Left ventricle myocardium inferior (tissue), 1 donor: ENCODE measurements at regions of chr7 and their contacts with region 1.

Region 1: DNA sequence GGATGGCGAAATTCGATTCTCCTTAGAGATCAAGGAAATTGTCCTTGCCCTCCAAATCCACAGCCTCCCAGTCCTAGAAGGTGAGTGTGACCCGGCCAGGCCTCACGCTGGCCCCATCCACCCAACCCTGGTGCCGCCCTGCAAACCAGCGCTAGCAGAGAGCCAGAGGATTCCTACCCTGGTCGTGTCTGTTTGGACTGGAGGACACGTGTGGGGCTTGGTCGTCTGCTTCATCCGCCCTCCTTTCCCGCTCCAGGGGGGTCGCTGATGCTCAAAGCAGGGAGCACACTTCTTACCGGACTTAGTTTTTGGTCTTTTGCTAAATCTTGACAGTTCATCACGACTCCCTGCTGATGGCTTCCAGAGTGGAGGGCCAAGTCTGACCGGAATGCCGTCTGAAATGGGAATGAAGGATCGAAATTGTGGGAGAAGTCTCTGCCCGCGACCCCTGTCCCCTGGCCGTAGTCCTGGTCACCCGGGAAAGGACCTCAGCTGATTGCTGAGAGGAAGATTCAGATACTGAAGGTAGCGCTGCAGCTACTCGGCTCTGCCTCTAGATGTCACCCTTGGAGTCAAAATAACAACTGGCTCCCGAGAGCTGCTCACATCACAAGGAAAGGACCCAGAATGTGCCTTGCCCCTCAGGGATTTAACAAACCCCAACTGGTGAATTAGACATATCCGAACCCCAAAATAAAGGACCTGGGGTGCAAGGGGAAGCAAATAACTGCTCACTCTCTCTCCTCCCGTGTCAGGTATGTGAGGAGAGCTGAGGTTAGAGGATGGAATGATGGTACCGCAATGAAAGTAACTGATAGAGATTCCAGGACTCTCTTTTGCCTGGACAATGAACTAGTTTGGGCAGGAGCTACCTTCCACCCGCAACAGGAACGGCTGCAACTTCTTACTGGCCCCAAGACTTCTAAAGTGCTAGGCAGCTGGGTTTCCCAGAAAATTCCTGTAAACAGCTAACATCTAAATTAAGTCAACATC is 23.5 kb upstream of the ORC5 start:
- DNase-seq: no peak
- H3K4me3 ChIP-seq: no peak overlapping the region
- H3K27ac ChIP-seq: no peak overlapping the region
- H3K4me1 ChIP-seq: no peaks in the 10 kb centered on the region
- H3K27me3 ChIP-seq: peaks cover 25% of the 10 kb centered on the region
- CTCF ChIP-seq: peak; percentile 83

Region 2: GRCh38 chr7:104074529-104074928 is 156.8 kb before region 1 on chr7:
- intact Hi-C with region 1: no loop called
- DNase-seq: no peak
- H3K4me3 ChIP-seq: no peak overlapping the region
- H3K27ac ChIP-seq: no peak overlapping the region
- H3K4me1 ChIP-seq: no peaks in the 10 kb centered on the region
- H3K27me3 ChIP-seq: no peaks in the 10 kb centered on the region
- CTCF ChIP-seq: no peak

Region 3: DNA sequence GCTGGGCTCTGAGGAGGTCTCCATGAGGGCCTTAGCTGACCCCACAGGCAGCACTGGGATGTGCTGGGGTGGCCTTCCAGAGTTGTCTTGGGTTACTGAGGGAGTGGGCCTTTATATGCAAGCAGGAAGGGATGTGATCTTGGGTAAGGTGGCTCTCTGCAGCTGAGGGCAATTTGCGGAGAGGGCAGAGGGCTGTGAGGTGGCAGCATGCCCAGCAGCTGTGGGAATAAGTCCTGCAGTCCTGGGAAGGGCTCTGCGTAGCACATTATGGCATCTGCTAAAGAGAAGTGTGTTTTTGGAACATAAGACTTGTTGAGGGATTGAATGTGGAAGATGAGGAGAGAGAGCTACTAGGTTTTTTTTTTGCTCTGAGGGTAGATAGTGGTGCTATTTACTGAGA is 683.1 kb after region 1 on chr7:
- intact Hi-C with region 1: loop called (anchors 10 kb)
- DNase-seq: no peak
- H3K4me3 ChIP-seq: no peak overlapping the region
- H3K27ac ChIP-seq: no peak overlapping the region
- H3K4me1 ChIP-seq: no peaks in the 10 kb centered on the region
- H3K27me3 ChIP-seq: no peaks in the 10 kb centered on the region
- CTCF ChIP-seq: no peak